GM12878 (cell line): ENCODE measurements at regions of chr3 and their contacts with region 1.

Region 1: GRCh38 chr3:63961891-63962290 is 49.7 kb upstream of the SCAANT1 start:
- DNase-seq: no peak
- ATAC-seq: peak; percentile 80
- H3K4me3 ChIP-seq: no peak overlapping the region
- H3K27ac ChIP-seq: no peak overlapping the region
- H3K4me1 ChIP-seq: peaks cover 16% of the 10 kb centered on the region
- H3K27me3 ChIP-seq: no peaks in the 10 kb centered on the region
- CTCF ChIP-seq: peak; percentile 60 to 63 (median 62); a peak in 5 of 6 replicates
- EP300 ChIP-seq: no peak
- POLR2A ChIP-seq: no peak
- RAD21 ChIP-seq: peak; percentile 52

Region 2: DNA sequence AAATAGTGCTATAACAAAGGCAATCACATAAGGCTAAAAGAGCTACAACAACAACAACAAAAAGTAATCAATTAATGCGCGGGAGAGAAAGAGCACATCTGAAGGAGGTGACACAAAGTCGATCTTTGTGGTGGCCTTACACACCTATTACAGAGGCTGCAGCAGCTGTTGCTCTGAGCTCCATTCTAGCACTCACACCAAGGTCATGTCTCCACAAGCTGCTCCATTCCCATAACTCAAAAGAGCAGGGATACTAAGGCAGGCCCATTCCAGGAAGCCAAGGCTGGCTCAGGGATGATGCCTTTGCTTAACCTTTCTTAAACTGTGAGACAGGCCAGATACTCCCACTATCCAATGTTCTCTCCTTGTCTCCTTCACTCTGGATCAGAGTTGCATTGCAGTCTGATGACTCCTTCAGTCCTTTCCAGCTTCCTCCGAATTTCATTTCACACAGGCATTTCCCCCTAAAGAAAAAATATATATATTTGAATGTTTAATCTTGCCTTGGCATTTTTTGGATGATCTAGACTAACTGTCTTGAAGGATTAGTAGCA is 256.7 kb before region 1 on chr3:
- CTCF ChIA-PET with region 1: no interaction called
- POLR2A ChIA-PET with region 1: no interaction called
- RAD21 ChIA-PET with region 1: no interaction called
- SMC1A ChIA-PET with region 1: no interaction called
- in situ Hi-C with region 1: no loop called
- intact Hi-C with region 1: no loop called
- DNase-seq: no peak
- ATAC-seq: no peak
- H3K4me3 ChIP-seq: no peak overlapping the region
- H3K27ac ChIP-seq: no peak overlapping the region
- H3K4me1 ChIP-seq: no peaks in the 10 kb centered on the region
- H3K27me3 ChIP-seq: no peaks in the 10 kb centered on the region
- CTCF ChIP-seq: no peak
- EP300 ChIP-seq: no peak
- POLR2A ChIP-seq: no peak
- RAD21 ChIP-seq: no peak

Region 3: GRCh38 chr3:63937661-63938651 is 23.9 kb before region 1 on chr3:
- CTCF ChIA-PET with region 1: interaction called, 8 read pairs
- POLR2A ChIA-PET with region 1: no interaction called
- RAD21 ChIA-PET with region 1: interaction called, 5 read pairs
- SMC1A ChIA-PET with region 1: interaction called, 29 read pairs
- in situ Hi-C with region 1: no loop called
- intact Hi-C with region 1: no loop called
- DNase-seq: peak; percentile 55
- ATAC-seq: peak; percentile 83
- H3K4me3 ChIP-seq: peak overlapping the region; percentile 11; the same call in 1 of the 2 replicates
- H3K27ac ChIP-seq: peak overlapping the region; percentile 44; the same call in 1 of the 2 replicates
- H3K4me1 ChIP-seq: peaks cover 43% of the 10 kb centered on the region
- H3K27me3 ChIP-seq: no peaks in the 10 kb centered on the region
- CTCF ChIP-seq: peak in 1 of 3 experiments; percentile 27; a peak in 1 of 6 replicates
- EP300 ChIP-seq: 0 out of 4 replicates have a peak, but pooled peaks of 1 of the 2 experiments have one; percentile 8
- POLR2A ChIP-seq: no peak
- RAD21 ChIP-seq: no peak

Region 4: DNA sequence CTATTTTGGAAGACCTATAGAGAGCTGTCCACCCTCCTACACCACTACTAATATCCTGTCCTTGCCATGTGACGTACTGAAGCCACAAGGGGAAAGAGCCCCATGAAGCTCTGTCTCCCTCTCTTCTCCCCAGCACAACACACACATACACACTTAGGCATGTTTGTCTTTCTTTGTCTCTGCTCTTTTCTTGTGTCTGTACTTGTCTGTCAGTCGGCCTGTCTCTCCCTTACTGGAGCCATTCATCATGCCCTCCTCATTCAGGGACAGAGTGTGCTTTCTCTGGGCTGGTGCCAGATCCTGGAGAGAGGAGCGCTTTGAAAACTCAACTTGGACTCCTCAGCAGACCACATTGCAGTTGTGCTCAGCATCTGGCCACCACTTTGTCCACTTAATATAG is 13.8 kb after region 1 on chr3:
- CTCF ChIA-PET with region 1: interaction called, 53 read pairs
- POLR2A ChIA-PET with region 1: interaction called, 3 read pairs
- RAD21 ChIA-PET with region 1: interaction called, 6 read pairs
- SMC1A ChIA-PET with region 1: interaction called, 32 read pairs
- in situ Hi-C with region 1: no loop called
- intact Hi-C with region 1: no loop called
- DNase-seq: no peak
- ATAC-seq: no peak
- H3K4me3 ChIP-seq: no peak overlapping the region
- H3K27ac ChIP-seq: no peak overlapping the region
- H3K4me1 ChIP-seq: peaks cover 5% of the 10 kb centered on the region; the same call in 1 of the 2 replicates
- H3K27me3 ChIP-seq: no peaks in the 10 kb centered on the region
- CTCF ChIP-seq: no peak
- EP300 ChIP-seq: no peak
- POLR2A ChIP-seq: no peak
- RAD21 ChIP-seq: no peak

Region 5: GRCh38 chr3:64011685-64012084 is 49.8 kb after region 1 on chr3:
- CTCF ChIA-PET with region 1: interaction called, 11 read pairs
- POLR2A ChIA-PET with region 1: no interaction called
- RAD21 ChIA-PET with region 1: interaction called, 7 read pairs
- SMC1A ChIA-PET with region 1: interaction called, 7 read pairs
- in situ Hi-C with region 1: no loop called
- intact Hi-C with region 1: no loop called
- DNase-seq: no peak
- ATAC-seq: no peak
- H3K4me3 ChIP-seq: no peak overlapping the region
- H3K27ac ChIP-seq: no peak overlapping the region
- H3K4me1 ChIP-seq: peaks cover 6% of the 10 kb centered on the region
- H3K27me3 ChIP-seq: no peaks in the 10 kb centered on the region
- CTCF ChIP-seq: no peak
- EP300 ChIP-seq: no peak
- POLR2A ChIP-seq: no peak
- RAD21 ChIP-seq: no peak